PC-3 (cell line): ENCODE measurements at regions of chr1 and their contacts with region 1.

Region 1: DNA sequence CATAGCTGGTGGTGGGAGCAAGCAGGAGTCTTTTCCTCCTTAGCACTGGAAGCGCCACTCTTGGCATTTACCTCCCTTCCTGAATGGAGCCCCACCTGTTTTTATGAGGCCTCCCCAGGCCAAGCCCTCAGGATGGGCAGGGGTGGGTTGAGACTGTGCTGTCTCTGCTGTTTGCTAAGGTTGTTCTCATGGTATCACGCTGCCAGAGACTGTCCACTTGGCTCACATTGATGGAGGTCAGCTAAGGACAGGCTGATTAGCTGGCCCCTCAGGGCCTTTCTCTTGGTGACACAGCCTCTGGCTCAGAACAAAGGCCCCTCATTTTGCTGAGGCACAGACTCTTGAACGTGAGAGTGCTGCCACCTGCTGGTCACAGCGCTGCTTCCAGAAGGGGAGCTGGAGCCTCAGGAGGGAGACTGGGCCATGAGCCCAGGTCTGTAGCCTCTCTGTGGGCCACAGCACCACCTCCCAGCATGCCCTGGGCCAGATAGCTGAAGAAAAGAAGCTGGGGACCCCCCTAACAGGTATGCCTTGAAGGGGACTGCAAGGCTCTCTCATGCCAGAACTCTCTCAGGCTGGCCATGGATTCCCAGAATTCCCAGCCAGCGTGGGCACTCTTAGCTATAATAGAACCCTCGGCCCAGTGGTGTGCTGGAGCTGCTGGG is 85.6 kb downstream of the CD58 start:
- DNase-seq: peak; percentile 94
- ATAC-seq: peak; percentile 60
- H3K4me3 ChIP-seq: no peak overlapping the region
- H3K27ac ChIP-seq: peak overlapping the region; percentile 92; the same call in 1 of the 2 replicates
- H3K4me1 ChIP-seq: peaks cover 55% of the 10 kb centered on the region
- H3K27me3 ChIP-seq: no peaks in the 10 kb centered on the region
- CTCF ChIP-seq: peak; percentile 98

Region 2: DNA sequence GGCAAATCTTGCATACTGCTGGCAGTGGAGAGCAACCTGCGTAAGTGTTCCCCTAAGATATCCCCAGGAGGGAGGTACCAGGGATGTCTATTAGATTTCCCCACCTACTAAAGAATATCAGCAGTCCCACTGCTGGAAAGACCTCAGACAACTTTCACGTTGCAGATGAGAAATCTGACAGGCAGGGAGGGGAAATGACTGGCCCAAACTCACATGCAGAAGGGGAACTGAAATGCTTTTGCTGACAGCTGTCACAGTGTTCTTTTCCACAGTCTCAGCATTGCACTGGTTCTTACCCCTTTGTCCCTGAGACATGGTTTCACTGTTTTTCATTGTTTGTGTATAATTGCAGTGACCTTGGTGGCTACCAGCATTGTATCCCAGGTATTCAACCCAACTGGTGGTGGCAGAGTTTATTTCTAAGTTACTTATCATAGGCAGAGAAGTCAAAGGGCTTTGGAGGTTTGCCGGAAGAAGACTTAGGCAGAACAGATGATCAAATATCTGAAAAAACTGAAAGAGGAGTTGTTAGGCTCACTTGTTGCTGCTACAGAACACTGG is 196.9 kb before region 1 on chr1:
- CTCF ChIA-PET with region 1: no interaction called
- POLR2A ChIA-PET with region 1: no interaction called
- intact Hi-C with region 1: no loop called
- DNase-seq: no peak
- ATAC-seq: no peak
- H3K4me3 ChIP-seq: no peak overlapping the region
- H3K27ac ChIP-seq: no peak overlapping the region; the same call in 1 of the 2 replicates
- H3K4me1 ChIP-seq: peaks cover 33% of the 10 kb centered on the region
- H3K27me3 ChIP-seq: no peaks in the 10 kb centered on the region
- CTCF ChIP-seq: no peak

Region 3: GRCh38 chr1:116360429-116361173 is 124.6 kb before region 1 on chr1:
- CTCF ChIA-PET with region 1: no interaction called
- POLR2A ChIA-PET with region 1: no interaction called
- intact Hi-C with region 1: loop called (anchors 1 kb)
- DNase-seq: peak; percentile 41
- ATAC-seq: no peak
- H3K4me3 ChIP-seq: no peak overlapping the region
- H3K27ac ChIP-seq: no peak overlapping the region
- H3K4me1 ChIP-seq: peaks cover 43% of the 10 kb centered on the region
- H3K27me3 ChIP-seq: no peaks in the 10 kb centered on the region
- CTCF ChIP-seq: peak; percentile 56

Region 4: DNA sequence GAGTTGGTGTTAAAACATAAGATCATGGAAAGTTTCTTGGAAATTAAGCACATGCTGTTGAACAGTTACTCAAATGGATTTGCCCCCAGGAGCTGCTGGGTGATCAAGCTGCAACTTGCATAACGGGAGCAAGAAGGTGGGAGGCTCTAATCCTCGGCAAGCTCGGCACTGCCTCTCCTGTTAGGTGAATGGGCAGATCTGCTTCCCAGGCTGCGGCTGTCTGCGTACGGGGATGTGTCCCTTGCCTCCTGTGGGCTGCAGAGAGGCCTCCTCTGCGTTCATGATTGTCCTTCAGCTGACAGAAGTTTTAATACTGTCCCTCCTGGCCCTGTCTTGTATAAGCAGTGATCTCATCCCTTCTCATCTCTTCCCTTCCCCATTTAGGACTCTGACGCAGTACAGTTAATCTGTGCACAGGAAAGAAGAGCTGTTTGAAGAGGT is 75.4 kb before region 1 on chr1:
- CTCF ChIA-PET with region 1: no interaction called
- POLR2A ChIA-PET with region 1: no interaction called
- intact Hi-C with region 1: loop called (anchors 10 kb)
- DNase-seq: no peak
- ATAC-seq: peak; percentile 29; the same call in 1 of the 2 replicates
- H3K4me3 ChIP-seq: no peak overlapping the region
- H3K27ac ChIP-seq: no peak overlapping the region
- H3K4me1 ChIP-seq: no peaks in the 10 kb centered on the region
- H3K27me3 ChIP-seq: no peaks in the 10 kb centered on the region
- CTCF ChIP-seq: no peak